ENCODE measurements at regions of chr2 and their contacts with region 1.

Region 1: DNA sequence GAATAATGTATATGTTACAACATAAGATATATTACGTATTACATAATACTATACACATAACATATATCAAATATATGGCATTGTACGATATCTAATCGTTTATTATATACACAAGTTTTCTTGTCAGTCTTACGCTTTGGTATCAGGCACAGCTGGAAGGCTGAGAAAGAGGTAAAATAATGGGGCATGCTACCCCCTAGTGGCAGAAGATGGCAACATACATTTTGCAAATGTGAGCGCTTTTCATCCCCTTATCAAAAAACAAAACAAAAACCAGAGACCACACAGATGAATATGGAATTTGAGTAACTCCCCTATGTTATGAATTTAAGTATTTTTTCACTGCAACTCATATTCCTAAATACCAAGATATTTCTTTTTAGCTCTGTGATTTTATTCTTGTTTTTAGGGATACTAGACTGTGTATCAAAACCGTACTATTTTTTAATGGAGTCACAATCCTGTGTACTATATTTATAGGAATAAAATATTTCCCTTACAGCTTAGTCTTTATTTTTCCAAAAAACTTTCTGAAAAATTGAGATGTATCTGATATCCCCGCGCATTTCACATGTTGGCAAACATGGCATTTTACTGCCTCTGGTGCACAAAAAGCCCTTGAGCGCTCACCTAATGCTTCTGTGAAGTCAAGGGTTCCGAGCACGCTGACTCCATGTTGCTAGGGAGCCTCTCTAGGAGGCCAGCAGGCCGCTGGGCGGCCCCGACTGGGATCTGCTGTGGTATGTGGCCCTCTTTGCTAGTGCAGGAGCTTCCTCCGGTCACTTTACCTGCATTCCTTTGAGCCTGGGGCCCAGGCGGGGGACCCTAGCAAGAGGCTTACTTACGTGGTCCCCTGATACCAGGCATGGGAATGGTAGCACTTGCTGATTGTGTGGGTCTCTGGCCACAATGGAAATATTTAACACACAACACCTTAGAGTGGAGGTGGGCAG is 62.5 kb downstream of the SLC4A3 start:
- DNase-seq: peak; percentile 56
- H3K4me3 ChIP-seq: peak overlapping the region in 1 of 3 experiments; percentile 24
- H3K27ac ChIP-seq: peak overlapping the region; percentile 98
- H3K4me1 ChIP-seq: peaks cover 50% of the 10 kb centered on the region
- H3K27me3 ChIP-seq: no peaks in the 10 kb centered on the region
- CTCF ChIP-seq: peak; percentile 66 to 70

Region 2: DNA sequence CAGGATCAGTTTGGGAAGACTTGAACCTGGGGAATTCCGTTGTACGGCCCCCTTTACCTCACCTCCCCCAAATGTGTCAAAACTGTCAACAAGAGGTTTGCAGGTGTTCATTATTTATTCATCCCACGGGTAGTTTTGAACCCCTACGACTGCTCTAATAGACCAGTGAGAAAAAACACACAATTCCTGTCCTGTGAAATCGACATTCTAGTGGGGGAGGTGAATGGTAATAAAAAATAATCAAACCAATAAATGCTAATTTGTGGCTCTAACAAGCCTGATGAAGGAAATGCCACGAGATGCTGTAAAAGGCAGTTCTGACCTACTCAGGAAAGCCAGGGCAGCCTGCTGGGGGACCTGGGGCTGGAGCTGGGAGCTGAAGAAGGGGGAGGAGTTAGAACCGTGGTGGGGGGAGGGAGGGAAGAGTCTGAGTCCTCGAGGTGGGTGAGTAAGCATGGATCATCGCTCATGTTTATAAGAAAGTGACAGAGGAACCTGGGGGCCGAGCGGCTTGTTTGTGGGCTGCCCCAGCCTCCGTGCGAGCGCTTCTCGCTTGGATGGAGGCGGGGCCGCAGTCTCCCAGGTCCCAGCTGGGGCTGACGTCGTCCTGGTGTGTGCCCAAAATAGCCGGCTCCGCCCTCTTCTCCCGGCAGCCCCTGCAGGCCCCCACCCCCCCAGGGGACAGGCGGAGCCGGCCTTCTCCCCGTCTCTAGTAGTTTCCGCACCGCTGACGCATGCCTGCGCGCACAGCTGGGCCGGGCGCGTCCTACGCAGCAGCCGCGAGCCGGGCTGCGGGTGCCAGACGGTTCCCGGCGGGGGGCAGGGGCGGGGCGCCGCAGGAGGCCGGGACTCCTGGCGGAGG is 411.1 kb before region 1 on chr2 and contains the start of gene DNAJB2:
- CTCF ChIA-PET with region 1: no interaction called
- dilution Hi-C with region 1: no loop called
- in situ Hi-C with region 1: no loop called
- intact Hi-C with region 1: loop called (anchors 10 kb)
- DNase-seq: peak; percentile 99
- H3K4me3 ChIP-seq: peak within 1 kb of the TSS; percentile 62 to 70 (median 62)
- H3K27ac ChIP-seq: peak within 1 kb of the TSS; percentile 80
- H3K4me1 ChIP-seq: peaks cover 45% of the 10 kb centered on the region
- H3K27me3 ChIP-seq: no peaks in the 10 kb centered on the region
- CTCF ChIP-seq: no peak
- total RNA-seq, gene DNAJB2: 58.9 to 110 TPM

Region 3: GRCh38 chr2:219430633-219431615 is 259.0 kb before region 1 on chr2:
- CTCF ChIA-PET with region 1: no interaction called
- dilution Hi-C with region 1: no loop called
- in situ Hi-C with region 1: no loop called
- intact Hi-C with region 1: loop called (anchors 10 kb)
- DNase-seq: peak; percentile 41
- H3K4me3 ChIP-seq: no peak overlapping the region
- H3K27ac ChIP-seq: no peak overlapping the region
- H3K4me1 ChIP-seq: peaks cover 6% of the 10 kb centered on the region
- H3K27me3 ChIP-seq: no peaks in the 10 kb centered on the region
- CTCF ChIP-seq: peak; percentile 24 to 64

Region 4: GRCh38 chr2:219498280-219499057 is 191.5 kb before region 1 on chr2 and contains the start of gene GMPPA:
- CTCF ChIA-PET with region 1: interaction called, 4 read pairs
- dilution Hi-C with region 1: no loop called
- in situ Hi-C with region 1: no loop called
- intact Hi-C with region 1: loop called (anchors 1 kb)
- DNase-seq: peak; percentile 98
- H3K4me3 ChIP-seq: peak within 1 kb of the TSS; percentile 57 to 71 (median 65)
- H3K27ac ChIP-seq: peak within 1 kb of the TSS; percentile 53
- H3K4me1 ChIP-seq: peaks cover 18% of the 10 kb centered on the region
- H3K27me3 ChIP-seq: no peaks in the 10 kb centered on the region
- CTCF ChIP-seq: no peak
- total RNA-seq, gene GMPPA: 37.8 to 50.1 TPM

Region 5: DNA sequence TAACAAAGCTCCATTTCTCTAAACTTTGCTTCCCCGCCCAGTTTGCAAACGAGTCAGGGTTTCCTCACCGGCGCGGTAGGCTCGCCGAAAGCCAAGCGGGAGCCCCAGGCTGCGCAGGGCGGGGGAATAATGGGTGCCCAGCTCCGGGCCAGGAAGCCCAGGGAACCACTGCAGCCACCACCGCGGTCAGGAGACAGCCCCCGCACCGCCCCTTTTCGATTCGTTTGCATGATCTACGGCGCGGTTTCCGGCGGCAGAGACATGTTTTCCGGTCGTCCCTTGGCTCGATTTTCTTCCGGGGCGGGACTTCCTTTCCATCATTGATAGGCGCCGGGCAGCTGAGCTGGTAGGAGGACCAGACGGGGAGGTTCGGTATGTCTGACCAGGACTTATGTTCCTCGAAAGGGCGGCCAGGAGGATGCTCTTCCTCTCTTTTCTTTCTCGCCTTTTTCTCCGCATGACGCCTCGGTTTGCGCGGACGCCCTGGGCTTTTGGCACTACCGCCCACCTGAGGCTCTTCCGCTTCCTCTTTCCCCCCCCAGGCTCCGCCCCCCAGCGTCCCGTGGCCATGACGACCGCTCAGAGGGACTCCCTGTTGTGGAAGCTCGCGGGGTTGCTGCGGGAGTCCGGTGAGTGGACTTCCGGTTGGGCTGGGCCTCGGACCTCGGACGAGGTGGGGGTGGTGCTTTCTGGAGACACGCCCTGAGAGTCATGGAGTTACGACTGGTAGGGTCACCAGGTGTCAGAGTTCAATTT is 92.2 kb before region 1 on chr2 and contains the start of gene STK11IP:
- CTCF ChIA-PET with region 1: no interaction called
- dilution Hi-C with region 1: no loop called
- in situ Hi-C with region 1: no loop called
- intact Hi-C with region 1: loop called (anchors 1 kb)
- DNase-seq: peak; percentile 97
- H3K4me3 ChIP-seq: peak within 1 kb of the TSS; percentile 59 to 74 (median 64)
- H3K27ac ChIP-seq: peak within 1 kb of the TSS; percentile 91
- H3K4me1 ChIP-seq: peaks cover 16% of the 10 kb centered on the region
- H3K27me3 ChIP-seq: no peaks in the 10 kb centered on the region
- CTCF ChIP-seq: no peak
- total RNA-seq, gene STK11IP: 14.5 to 27.6 TPM

Region 6: GRCh38 chr2:219736209-219736608 is 46.3 kb after region 1 on chr2:
- CTCF ChIA-PET with region 1: no interaction called
- dilution Hi-C with region 1: no loop called
- in situ Hi-C with region 1: no loop called
- intact Hi-C with region 1: loop called (anchors 2 kb)
- DNase-seq: peak; percentile 67
- H3K4me3 ChIP-seq: no peak overlapping the region
- H3K27ac ChIP-seq: no peak overlapping the region
- H3K4me1 ChIP-seq: peaks cover 12% of the 10 kb centered on the region
- H3K27me3 ChIP-seq: no peaks in the 10 kb centered on the region
- CTCF ChIP-seq: peak; percentile 47 to 62

Measured in mammary epithelial cell (primary cell).